Adrenal gland (tissue), 19 donors: ENCODE measurements at regions of chr1 and their contacts with region 1.

Region 1: DNA sequence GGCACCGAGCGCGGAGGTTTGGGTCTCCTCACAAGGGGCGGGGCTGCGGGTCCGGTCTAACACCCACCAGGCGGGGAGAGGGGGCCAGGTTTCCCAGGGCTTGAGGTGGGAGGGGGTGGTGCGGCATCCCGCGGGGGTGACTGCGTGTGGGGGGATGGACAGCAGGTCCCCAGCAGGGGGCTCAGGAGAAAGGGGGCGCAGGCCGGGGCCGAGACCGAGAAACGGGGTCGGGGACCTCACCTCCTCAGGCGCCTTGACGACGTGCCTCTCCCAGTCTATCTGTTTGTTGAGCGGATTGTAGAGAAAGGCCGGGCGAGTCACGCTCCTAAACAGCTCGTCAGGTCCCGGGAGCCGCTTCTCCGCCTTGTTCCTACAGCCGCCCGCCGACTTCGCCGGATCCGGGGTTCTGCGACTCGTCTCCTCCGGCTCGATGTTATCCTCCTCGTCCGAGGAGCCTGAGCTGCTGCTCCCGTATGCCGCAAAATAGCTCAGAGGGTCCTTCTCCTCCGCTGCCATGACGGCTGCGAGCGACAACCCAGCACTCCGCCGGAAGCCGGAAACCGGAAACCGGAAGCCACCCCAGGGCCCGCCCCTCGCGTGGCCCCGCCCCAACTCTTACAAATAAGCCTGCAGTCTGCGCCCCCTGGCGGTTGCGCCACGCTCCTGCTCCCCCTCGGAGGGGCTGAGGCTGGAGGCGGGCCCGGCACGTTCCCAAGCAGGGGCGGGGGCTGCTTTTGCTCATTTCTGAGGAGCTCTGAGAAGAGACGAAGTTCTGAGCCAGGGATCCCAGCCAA is at the start of gene C1orf52:
- DNase-seq: peak; percentile 92 to 97 (median 96)
- H3K4me3 ChIP-seq: peak within 1 kb of the TSS; percentile 34 to 87 (median 74)
- H3K27ac ChIP-seq: peak within 1 kb of the TSS in 4 of 5 donors; percentile 34 to 89 (median 75)
- H3K4me1 ChIP-seq: peaks cover 17 to 33% of the 10 kb centered on the region in 2 donors
- H3K27me3 ChIP-seq: no peaks in the 10 kb centered on the region
- CTCF ChIP-seq: peak; percentile 90 to 100 (median 98)
- POLR2A ChIP-seq: peak in 1 of 2 donors; percentile 62
- total RNA-seq, gene C1orf52: 6.5 to 28.9 (median 17.9) TPM

Region 2: DNA sequence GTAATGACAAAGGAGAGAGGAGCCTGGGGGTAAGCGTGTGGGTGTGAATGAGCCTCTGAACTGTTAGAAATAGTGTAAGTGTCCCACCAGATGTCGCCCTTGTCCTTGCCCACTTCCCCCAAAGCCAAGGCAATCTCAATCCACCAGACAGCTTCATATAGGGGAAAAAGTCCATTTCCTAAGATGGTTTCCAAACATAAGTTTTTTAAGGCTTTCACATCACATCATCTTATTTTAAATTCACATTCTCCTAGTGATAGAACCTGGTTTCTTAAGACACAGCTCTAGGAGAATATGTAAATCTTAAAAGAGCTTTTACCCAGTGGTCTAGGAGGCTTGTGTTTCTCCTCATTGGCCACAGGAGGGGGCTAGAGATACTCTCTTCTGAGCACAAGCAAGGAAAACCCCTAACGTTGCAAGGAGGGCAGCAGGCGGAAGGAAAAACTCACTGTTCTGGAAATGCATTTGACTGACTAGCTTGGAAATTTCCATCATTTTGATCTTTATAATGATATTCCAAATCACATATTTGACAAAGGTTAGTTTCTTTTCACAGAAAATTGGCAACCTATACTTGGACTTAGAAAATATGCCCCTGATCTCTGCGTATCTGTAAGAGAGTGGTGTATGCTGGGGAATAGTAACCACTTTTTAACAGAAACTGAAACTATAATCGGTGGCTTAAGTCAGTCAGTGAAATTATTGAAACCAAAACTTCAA is 314.4 kb before region 1 on chr1:
- intact Hi-C with region 1: loop called in 1 of 2 experiments (anchors 5 kb)
- DNase-seq: peak; percentile 71 to 86 (median 83)
- H3K4me3 ChIP-seq: peak overlapping the region in 2 of 4 donors; percentile 23 to 52
- H3K27ac ChIP-seq: peak overlapping the region; percentile 19 to 84 (median 77)
- H3K4me1 ChIP-seq: peaks cover 5 to 12% of the 10 kb centered on the region in 2 donors
- H3K27me3 ChIP-seq: no peaks in the 10 kb centered on the region
- CTCF ChIP-seq: peak; percentile 84 to 99 (median 96)
- POLR2A ChIP-seq: no peak

Region 3: GRCh38 chr1:85001742-85002141 is 257.6 kb before region 1 on chr1:
- intact Hi-C with region 1: no loop called
- DNase-seq: no peak
- H3K4me3 ChIP-seq: no peak overlapping the region
- H3K27ac ChIP-seq: no peak overlapping the region
- H3K4me1 ChIP-seq: peaks cover 0 to 15% of the 10 kb centered on the region in 2 donors
- H3K27me3 ChIP-seq: no peaks in the 10 kb centered on the region
- CTCF ChIP-seq: no peak
- POLR2A ChIP-seq: no peak

Region 4: DNA sequence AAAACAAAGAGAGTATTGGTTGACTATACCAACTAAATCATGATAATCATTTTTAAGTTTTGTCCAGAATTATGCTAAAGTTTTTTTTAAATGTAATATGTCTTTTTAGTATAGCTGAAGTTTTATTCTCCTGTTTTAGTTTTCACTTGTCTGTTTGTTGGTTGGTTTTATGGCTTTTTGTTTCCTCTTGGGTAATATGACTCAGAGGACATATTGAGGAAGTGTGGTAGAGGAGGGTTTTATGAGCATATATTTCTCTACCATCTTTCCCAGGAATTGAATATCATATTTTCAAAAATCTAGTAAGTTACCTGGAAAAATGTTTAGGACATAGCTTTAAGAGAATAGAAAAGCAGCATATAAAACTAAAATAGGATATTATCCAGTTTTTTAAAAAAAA is 142.5 kb before region 1 on chr1:
- intact Hi-C with region 1: loop called in 1 of 2 experiments (anchors 10 kb)
- DNase-seq: no peak
- H3K4me3 ChIP-seq: no peak overlapping the region
- H3K27ac ChIP-seq: no peak overlapping the region
- H3K4me1 ChIP-seq: no peaks in the 10 kb centered on the region
- H3K27me3 ChIP-seq: no peaks in the 10 kb centered on the region
- CTCF ChIP-seq: no peak
- POLR2A ChIP-seq: no peak

Region 5: GRCh38 chr1:85200870-85201339 is 58.4 kb before region 1 on chr1 and contains the start of gene SYDE2:
- intact Hi-C with region 1: loop called in 1 of 2 experiments (anchors 5 kb)
- DNase-seq: peak; percentile 77 to 82 (median 81)
- H3K4me3 ChIP-seq: peak within 1 kb of the TSS; percentile 63 to 88 (median 70)
- H3K27ac ChIP-seq: peak within 1 kb of the TSS; percentile 79 to 93 (median 91)
- H3K4me1 ChIP-seq: peaks cover 9 to 17% of the 10 kb centered on the region in 2 donors
- H3K27me3 ChIP-seq: no peaks in the 10 kb centered on the region
- CTCF ChIP-seq: no peak
- POLR2A ChIP-seq: peak; percentile 16 to 72
- total RNA-seq, gene SYDE2: 3.2 to 6.3 (median 4.4) TPM